ENCODE measurements at regions of chr12 and their contacts with region 1.

Region 1: DNA sequence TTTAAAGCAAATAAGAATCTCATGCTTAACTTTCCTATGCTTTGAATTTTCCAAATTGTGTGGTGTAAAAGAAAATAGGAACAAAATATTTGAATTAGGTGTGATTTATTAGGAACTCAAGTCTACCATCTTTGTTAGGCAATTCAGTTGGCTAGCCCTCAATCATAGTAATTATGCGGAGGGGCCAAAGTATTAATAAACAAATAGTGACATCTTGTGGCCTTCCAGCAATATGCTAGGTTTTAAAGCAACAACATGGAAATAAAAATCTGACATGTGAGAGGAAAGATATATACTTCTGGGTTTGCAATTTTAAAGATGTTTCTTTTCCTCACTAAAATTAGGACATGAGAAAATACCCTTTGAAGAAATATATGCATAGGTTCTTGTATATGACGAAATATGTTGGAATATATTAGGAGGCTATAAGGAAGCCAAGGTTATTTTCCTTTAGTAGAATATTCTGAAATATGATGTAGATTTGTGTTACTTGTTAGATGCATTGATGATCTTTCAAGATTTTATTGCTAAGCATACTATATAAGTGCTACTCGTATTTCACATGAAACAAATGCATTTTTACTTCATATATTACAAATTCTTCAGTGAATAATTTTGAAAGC is 200.4 kb downstream of the PTPRO start:
- DNase-seq: peak in 1 of 2 experiments; percentile 48
- H3K4me3 ChIP-seq: no peak overlapping the region
- H3K4me3 Mint-ChIP-seq: no peak overlapping the region
- H3K27ac Mint-ChIP-seq: no peak overlapping the region
- H3K4me1 ChIP-seq: no peaks in the 10 kb centered on the region
- H3K4me1 Mint-ChIP-seq: no peaks in the 10 kb centered on the region
- H3K27me3 ChIP-seq: no peaks in the 10 kb centered on the region; the same call in 1 of the 2 replicates
- H3K27me3 Mint-ChIP-seq: peaks cover 17% of the 10 kb centered on the region
- CTCF ChIP-seq: peak; percentile 59 to 70

Region 2: DNA sequence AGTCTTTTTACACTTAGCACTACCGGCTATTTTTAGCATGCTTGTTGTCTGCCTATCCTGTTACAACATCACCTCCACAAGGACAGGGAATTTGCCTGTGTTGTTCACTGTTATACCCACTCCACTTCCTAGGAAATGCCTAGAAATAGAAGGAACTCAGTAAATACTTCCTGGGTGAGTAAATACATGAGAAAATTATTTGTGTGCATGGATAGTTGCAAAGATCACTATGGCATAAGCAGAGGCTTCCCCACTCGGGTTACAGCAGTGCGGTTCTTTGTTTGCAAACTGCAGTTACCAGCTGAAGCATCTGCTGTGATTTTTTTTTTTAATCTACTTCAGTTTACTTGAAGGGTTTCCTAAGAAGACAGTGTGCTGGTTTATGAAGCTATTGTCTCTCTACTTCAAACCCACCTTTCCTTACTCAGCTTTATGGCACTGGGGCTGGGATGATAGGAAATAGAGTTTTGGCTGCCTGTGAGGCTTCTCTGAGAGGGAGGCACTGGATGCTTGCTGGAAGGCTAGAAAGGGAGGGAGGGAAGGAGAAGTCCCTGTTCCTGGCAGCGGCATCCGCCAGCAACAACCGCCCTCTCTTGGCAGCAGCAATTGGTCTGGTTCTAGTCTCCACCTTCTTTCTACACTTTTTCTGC is 520.8 kb before region 1 on chr12:
- CTCF ChIA-PET with region 1: interaction called, 10 read pairs
- POLR2A ChIA-PET with region 1: no interaction called
- intact Hi-C with region 1: no loop called
- DNase-seq: no peak
- H3K4me3 ChIP-seq: no peak overlapping the region
- H3K4me3 Mint-ChIP-seq: no peak overlapping the region
- H3K27ac Mint-ChIP-seq: no peak overlapping the region
- H3K4me1 ChIP-seq: 0 out of 2 replicates have a peak, but pooled peaks cover 4% of the 10 kb centered on the region
- H3K4me1 Mint-ChIP-seq: peaks cover 7% of the 10 kb centered on the region
- H3K27me3 ChIP-seq: peaks cover 2% of the 10 kb centered on the region; the same call in 1 of the 2 replicates
- H3K27me3 Mint-ChIP-seq: peaks cover 29% of the 10 kb centered on the region
- CTCF ChIP-seq: no peak

Region 3: DNA sequence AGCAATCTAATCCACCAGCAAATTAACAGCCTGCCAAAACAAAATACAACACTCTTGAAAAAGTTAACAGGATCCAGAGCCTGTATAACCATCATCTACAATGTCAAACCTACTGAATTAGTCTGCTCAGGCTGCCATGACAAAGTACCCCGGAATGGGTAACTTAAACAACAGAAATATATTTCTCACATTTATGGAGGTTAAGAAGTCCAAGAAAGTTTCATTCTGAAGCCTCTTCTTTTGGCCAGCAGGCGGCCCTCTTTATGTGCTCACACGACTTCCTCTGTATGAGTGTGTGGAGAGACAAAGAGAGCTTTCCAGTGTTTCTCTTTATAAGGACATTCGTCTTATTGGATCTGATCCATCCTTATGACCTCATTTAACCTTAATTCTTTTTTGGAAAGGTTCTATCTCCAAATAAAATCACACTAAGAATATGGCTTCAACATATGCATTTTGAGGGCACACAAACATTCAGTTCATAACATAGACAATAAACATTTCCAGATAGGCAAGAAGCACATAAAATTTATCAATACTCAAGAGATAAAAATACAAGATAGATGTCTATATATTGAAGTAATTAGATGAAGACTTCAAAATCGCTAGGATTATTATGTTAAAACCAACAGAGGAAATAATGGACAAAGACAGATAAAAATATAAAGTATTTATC is 295.5 kb before region 1 on chr12:
- CTCF ChIA-PET with region 1: no interaction called
- POLR2A ChIA-PET with region 1: no interaction called
- intact Hi-C with region 1: loop called (anchors 1 kb)
- DNase-seq: peak; percentile 41 to 50
- H3K4me3 ChIP-seq: no peak overlapping the region
- H3K4me3 Mint-ChIP-seq: no peak overlapping the region
- H3K27ac Mint-ChIP-seq: no peak overlapping the region
- H3K4me1 ChIP-seq: no peaks in the 10 kb centered on the region
- H3K4me1 Mint-ChIP-seq: no peaks in the 10 kb centered on the region
- H3K27me3 ChIP-seq: no peaks in the 10 kb centered on the region
- H3K27me3 Mint-ChIP-seq: peaks cover 9% of the 10 kb centered on the region
- CTCF ChIP-seq: peak; percentile 82 to 85

Region 4: GRCh38 chr12:15276088-15276698 is 246.5 kb before region 1 on chr12:
- CTCF ChIA-PET with region 1: interaction called, 3 read pairs
- POLR2A ChIA-PET with region 1: no interaction called
- intact Hi-C with region 1: loop called (anchors 1 kb)
- DNase-seq: peak in 1 of 2 experiments; percentile 69
- H3K4me3 ChIP-seq: no peak overlapping the region
- H3K4me3 Mint-ChIP-seq: no peak overlapping the region
- H3K27ac Mint-ChIP-seq: no peak overlapping the region
- H3K4me1 ChIP-seq: no peaks in the 10 kb centered on the region
- H3K4me1 Mint-ChIP-seq: no peaks in the 10 kb centered on the region
- H3K27me3 ChIP-seq: no peaks in the 10 kb centered on the region
- H3K27me3 Mint-ChIP-seq: peaks cover 8% of the 10 kb centered on the region
- CTCF ChIP-seq: peak; percentile 61 to 83